Right cardiac atrium (tissue), 5 donors: ENCODE measurements at regions of chr16 and their contacts with region 1.

Region 1: GRCh38 chr16:57591086-57591869 is 37.2 kb upstream of the ADGRG1 start:
- DNase-seq: peak; percentile 68 to 86 (median 86)
- ATAC-seq: peak; percentile 93
- H3K4me3 ChIP-seq: no peak overlapping the region
- H3K27ac ChIP-seq: no peak overlapping the region
- H3K4me1 ChIP-seq: no peaks in the 10 kb centered on the region
- H3K27me3 ChIP-seq: no peaks in the 10 kb centered on the region

Region 2: GRCh38 chr16:57648590-57649442 is 57.5 kb after region 1 on chr16:
- intact Hi-C with region 1: loop called in 2 of 4 experiments (anchors 5 kb)
- DNase-seq: peak; percentile 66 to 89 (median 88)
- ATAC-seq: peak; percentile 24 to 47
- H3K4me3 ChIP-seq: no peak overlapping the region
- H3K27ac ChIP-seq: peak overlapping the region; percentile 62
- H3K4me1 ChIP-seq: peaks cover 6% of the 10 kb centered on the region
- H3K27me3 ChIP-seq: no peaks in the 10 kb centered on the region

Region 3: DNA sequence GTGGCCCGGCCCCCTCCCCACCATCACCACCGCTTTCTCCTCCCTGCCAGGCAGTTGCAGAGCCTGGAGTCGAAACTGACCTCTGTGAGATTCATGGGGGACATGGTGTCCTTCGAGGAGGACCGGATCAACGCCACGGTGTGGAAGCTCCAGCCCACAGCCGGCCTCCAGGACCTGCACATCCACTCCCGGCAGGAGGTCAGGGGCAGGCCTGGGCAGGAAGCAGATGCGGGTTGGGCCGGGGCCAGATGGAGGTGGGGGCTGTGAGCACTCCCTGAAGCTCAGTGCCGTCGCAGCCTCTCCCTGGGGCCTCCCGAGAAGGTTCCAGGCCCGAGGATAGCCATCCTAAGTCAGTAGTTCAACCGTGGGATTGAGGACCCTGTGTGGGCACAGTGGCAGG is 62.7 kb after region 1 on chr16:
- intact Hi-C with region 1: loop called in 2 of 4 experiments (anchors 5 kb)
- DNase-seq: no peak
- ATAC-seq: peak in 1 of 2 donors; percentile 21
- H3K4me3 ChIP-seq: no peak overlapping the region
- H3K27ac ChIP-seq: no peak overlapping the region
- H3K4me1 ChIP-seq: no peaks in the 10 kb centered on the region
- H3K27me3 ChIP-seq: no peaks in the 10 kb centered on the region

Region 4: DNA sequence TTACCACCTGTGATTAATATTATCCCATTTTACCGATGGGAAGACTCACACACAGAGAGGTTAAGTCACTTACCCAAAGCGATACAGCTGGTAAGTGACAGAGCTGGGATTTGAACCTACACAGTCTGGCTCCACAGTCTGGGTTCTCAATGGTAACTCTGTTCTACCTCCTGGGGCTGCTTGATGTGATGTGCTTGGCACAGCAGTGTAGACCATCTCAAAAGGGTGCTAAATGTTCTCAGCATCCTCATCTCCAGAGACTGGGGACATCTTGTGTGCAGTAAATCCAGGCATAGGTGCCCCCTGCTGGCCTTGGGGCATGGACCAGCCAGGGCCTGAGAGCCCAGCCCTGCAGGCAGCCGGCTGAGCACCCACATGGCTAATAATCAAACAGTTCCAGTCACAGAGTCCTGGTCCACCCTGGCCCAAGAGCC is 128.9 kb after region 1 on chr16:
- intact Hi-C with region 1: loop called in 2 of 4 experiments (anchors 5 kb)
- DNase-seq: peak in 2 of 3 donors; percentile 55 to 72
- ATAC-seq: peak; percentile 47 to 75
- H3K4me3 ChIP-seq: no peak overlapping the region
- H3K27ac ChIP-seq: no peak overlapping the region
- H3K4me1 ChIP-seq: no peaks in the 10 kb centered on the region
- H3K27me3 ChIP-seq: no peaks in the 10 kb centered on the region

Region 5: GRCh38 chr16:57734925-57735754 is 143.9 kb after region 1 on chr16:
- intact Hi-C with region 1: loop called in 1 of 4 experiments (anchors 10 kb)
- DNase-seq: peak; percentile 99
- ATAC-seq: peak; percentile 96 to 97
- H3K4me3 ChIP-seq: peak overlapping the region; percentile 73
- H3K27ac ChIP-seq: peak overlapping the region; percentile 94
- H3K4me1 ChIP-seq: no peaks in the 10 kb centered on the region
- H3K27me3 ChIP-seq: no peaks in the 10 kb centered on the region